ENCODE measurements at regions of chr18 and their contacts with region 1.

Region 1: DNA sequence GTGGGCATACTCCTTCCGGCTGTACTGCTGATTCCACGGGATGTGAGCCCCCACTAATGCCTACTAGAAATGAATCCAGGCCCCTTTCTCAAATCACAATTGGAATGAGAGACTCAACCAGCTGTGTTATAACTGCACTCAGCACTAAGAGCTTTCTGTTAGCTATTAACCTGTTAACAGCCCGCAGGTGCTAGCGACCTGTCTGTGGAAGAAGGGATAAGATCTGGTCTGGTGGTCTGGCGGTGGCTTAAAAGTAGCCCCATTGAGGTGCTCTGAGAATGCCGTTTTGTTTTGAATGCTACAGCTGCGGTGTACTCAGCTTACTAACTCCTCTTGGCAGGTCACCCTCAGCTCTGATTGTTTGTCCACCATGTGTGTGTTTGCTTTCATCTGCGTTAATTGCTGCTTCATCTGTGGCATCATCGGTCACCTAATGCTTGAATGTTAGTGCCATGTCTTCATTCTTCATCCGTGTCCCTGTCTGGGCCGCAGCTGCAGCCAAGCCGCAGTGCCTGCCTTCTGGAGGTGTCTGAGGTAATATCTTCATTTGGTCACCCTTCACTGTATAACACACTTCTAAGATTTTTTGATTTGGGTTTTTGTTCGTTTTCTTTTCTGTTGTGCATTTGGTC is 16.3 kb downstream of the RAB12 start:
- DNase-seq: no peak
- ATAC-seq: no peak
- H3K4me3 Mint-ChIP-seq: no peak overlapping the region
- H3K27ac Mint-ChIP-seq: no peak overlapping the region
- H3K4me1 Mint-ChIP-seq: peaks cover 37% of the 10 kb centered on the region
- H3K27me3 Mint-ChIP-seq: no peaks in the 10 kb centered on the region

Region 2: DNA sequence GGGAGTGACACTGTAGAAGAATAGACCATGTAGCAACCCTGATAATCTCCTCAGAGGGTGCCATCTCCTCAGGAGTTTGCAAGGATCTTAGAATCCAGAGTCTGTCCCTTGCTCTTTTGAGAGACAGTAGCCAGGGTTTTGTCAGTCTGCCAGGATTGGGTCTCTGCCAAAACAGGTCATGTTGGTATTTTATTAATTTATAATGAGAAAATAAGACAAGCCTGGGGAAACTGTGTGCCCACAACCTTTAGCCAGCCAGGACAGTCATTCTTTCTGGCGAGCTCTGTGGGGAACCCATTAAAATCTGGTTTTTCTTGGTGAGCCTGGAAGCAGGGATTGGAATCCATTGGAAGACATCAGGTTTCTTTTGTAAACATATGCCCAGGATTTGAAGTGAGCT is 979.8 kb before region 1 on chr18:
- CTCF ChIA-PET with region 1: no interaction called
- POLR2A ChIA-PET with region 1: no interaction called
- intact Hi-C with region 1: no loop called
- DNase-seq: no peak
- ATAC-seq: no peak
- H3K4me3 Mint-ChIP-seq: no peak overlapping the region
- H3K27ac Mint-ChIP-seq: no peak overlapping the region
- H3K4me1 Mint-ChIP-seq: no peaks in the 10 kb centered on the region
- H3K27me3 Mint-ChIP-seq: no peaks in the 10 kb centered on the region

Region 3: GRCh38 chr18:8314124-8314523 is 311.5 kb before region 1 on chr18:
- CTCF ChIA-PET with region 1: no interaction called
- POLR2A ChIA-PET with region 1: no interaction called
- intact Hi-C with region 1: no loop called
- DNase-seq: no peak
- ATAC-seq: no peak
- H3K4me3 Mint-ChIP-seq: no peak overlapping the region
- H3K27ac Mint-ChIP-seq: no peak overlapping the region
- H3K4me1 Mint-ChIP-seq: no peaks in the 10 kb centered on the region
- H3K27me3 Mint-ChIP-seq: no peaks in the 10 kb centered on the region

Region 4: GRCh38 chr18:8614875-8615274 is 10.7 kb before region 1 on chr18:
- CTCF ChIA-PET with region 1: interaction called, 3 read pairs
- POLR2A ChIA-PET with region 1: no interaction called
- intact Hi-C with region 1: loop called in 1 of 2 experiments (anchors 1 kb)
- DNase-seq: no peak
- ATAC-seq: no peak
- H3K4me3 Mint-ChIP-seq: no peak overlapping the region
- H3K27ac Mint-ChIP-seq: no peak overlapping the region
- H3K4me1 Mint-ChIP-seq: peaks cover 71% of the 10 kb centered on the region
- H3K27me3 Mint-ChIP-seq: no peaks in the 10 kb centered on the region

Measured in activated CD4-positive, alpha-beta T cell treated with anti-CD3 and anti-CD28 coated beads for 36 hours (primary cell).